Right ventricle myocardium superior (tissue), 1 donor: ENCODE measurements at regions of chr1 and their contacts with region 1.

Region 1: DNA sequence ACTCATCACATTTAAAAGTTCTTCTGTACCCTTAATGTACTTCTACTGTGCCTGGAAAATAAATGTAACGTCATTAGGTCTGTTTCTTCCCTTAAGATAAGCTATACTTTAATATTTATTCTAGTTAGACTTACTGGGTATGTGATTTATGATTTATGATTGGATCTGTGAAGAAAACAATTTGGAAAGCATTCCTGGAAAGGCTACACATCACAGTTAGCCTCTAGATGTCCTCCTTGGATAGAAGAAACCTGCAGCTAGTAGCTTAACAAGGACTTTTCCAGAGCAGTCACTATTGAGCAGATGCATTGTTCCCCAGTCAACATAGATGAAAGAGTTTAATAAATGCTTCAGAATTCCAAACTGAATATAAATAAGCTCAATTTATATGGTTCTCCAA is 22.2 kb upstream of the ABL2 start:
- DNase-seq: no peak
- ATAC-seq: peak; percentile 72

Region 2: GRCh38 chr1:179287946-179288345 is 36.3 kb after region 1 on chr1:
- intact Hi-C with region 1: no loop called
- DNase-seq: no peak
- ATAC-seq: no peak

Region 3: GRCh38 chr1:179298952-179299351 is 47.3 kb after region 1 on chr1:
- intact Hi-C with region 1: no loop called
- DNase-seq: no peak
- ATAC-seq: no peak

Region 4: GRCh38 chr1:179365320-179366092 is 113.8 kb after region 1 on chr1 and contains the start of gene AXDND1:
- intact Hi-C with region 1: loop called (anchors 5 kb)
- DNase-seq: peak; percentile 92
- ATAC-seq: peak; percentile 97
- total RNA-seq, gene AXDND1: not detected

Region 5: GRCh38 chr1:180462102-180462501 is 1210.4 kb after region 1 on chr1:
- intact Hi-C with region 1: no loop called
- DNase-seq: no peak
- ATAC-seq: no peak